K562 (cell line): ENCODE measurements at regions of chr7 and their contacts with region 1.

Region 1: GRCh38 chr7:35707422-35707821 is 12.5 kb upstream of the HERPUD2 start:
- DNase-seq: no peak
- ATAC-seq: no peak
- H3K4me3 ChIP-seq: no peak overlapping the region
- H3K27ac ChIP-seq: no peak overlapping the region
- H3K4me1 ChIP-seq: no peaks in the 10 kb centered on the region
- H3K27me3 ChIP-seq: peaks cover 2 to 13% of the 10 kb centered on the region in 2 experiments; a peak in 2 of 5 replicates
- CTCF ChIP-seq: no peak
- EP300 ChIP-seq: no peak
- POLR2A ChIP-seq: no peak
- RAD21 ChIP-seq: no peak

Region 2: DNA sequence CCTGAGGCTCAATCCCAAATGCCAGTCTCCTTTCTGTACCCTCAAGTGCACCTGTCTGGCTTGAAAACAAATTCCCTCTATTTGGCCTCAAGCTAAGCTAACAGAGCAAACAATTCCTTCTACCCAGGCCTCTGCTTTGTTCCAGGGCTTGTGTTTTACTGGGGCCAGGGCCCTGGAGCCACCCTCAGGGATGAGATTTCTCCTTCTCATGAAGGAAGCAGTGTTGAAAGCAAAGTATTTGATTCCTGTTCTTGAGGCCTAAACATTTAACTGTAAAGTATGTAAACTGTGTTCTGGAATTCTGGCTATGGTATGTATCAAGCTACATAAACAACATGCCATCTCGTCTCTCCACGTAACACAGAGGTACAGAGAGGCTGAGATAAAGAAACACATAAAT is 94.3 kb before region 1 on chr7:
- CTCF ChIA-PET with region 1: no interaction called
- POLR2A ChIA-PET with region 1: no interaction called
- in situ Hi-C with region 1: no loop called
- intact Hi-C with region 1: no loop called
- DNase-seq: no peak
- ATAC-seq: no peak
- H3K4me3 ChIP-seq: no peak overlapping the region
- H3K27ac ChIP-seq: no peak overlapping the region
- H3K4me1 ChIP-seq: no peaks in the 10 kb centered on the region
- H3K27me3 ChIP-seq: peaks cover 1 to 18% of the 10 kb centered on the region in 2 experiments; a peak in 4 of 5 replicates
- CTCF ChIP-seq: no peak
- EP300 ChIP-seq: no peak
- POLR2A ChIP-seq: no peak
- RAD21 ChIP-seq: no peak

Region 3: DNA sequence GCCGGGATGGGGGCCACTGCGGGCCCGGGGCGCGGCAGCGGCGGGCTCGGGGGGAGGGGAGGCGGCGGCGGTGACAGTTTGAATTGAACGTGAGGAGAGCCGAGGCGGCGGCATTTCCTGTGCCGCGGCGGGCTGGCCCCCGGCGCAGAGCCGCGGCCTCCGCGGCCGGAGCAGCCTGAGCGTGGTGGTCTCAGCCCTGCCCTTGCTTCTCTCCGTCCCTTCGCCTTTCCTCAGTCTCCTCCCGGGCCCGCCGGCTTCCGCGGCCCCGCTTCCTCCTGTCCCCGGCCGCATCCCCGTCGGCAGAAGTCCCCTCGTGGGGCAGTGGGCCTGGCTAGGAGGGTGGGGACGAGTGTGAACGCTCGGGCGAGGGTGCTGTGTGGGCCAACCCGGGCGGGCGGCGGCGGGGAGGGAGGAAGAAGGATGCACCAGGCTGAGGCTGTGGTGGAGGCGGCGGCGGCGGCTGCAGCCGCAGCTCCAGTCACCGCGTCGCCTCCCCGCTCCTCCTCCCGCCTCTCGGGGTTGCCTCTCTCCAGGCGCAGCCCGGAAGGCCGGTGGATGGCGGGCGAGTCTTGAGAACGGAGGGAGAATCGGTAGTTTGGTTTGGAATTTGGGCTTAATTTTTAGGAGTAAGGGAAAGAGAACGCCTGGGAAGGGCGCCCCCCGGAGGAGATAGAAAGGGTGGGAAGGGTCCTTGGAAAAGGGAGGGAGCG is 94.1 kb after region 1 on chr7:
- CTCF ChIA-PET with region 1: interaction called, 5 read pairs
- POLR2A ChIA-PET with region 1: interaction called, 3 read pairs
- in situ Hi-C with region 1: no loop called
- intact Hi-C with region 1: loop called (anchors 1 kb)
- DNase-seq: peak; percentile 48 to 68 (median 56)
- ATAC-seq: peak; percentile 73
- H3K4me3 ChIP-seq: peak overlapping the region; percentile 93
- H3K27ac ChIP-seq: peak overlapping the region; percentile 97
- H3K4me1 ChIP-seq: peaks cover 3 to 12% of the 10 kb centered on the region in 2 experiments; a peak in 3 of 5 replicates
- H3K27me3 ChIP-seq: no peaks in the 10 kb centered on the region
- CTCF ChIP-seq: peak; percentile 45 to 62 (median 60); a peak in 5 of 6 replicates
- EP300 ChIP-seq: no peak
- POLR2A ChIP-seq: no peak
- RAD21 ChIP-seq: peak; percentile 38 to 51; a peak in 3 of 4 replicates

Region 4: GRCh38 chr7:35975851-35976454 is 268.5 kb after region 1 on chr7:
- CTCF ChIA-PET with region 1: interaction called, 6 read pairs
- POLR2A ChIA-PET with region 1: no interaction called
- in situ Hi-C with region 1: no loop called
- intact Hi-C with region 1: loop called (anchors 5 kb)
- DNase-seq: peak; percentile 36 to 76 (median 38)
- ATAC-seq: peak; percentile 84
- H3K4me3 ChIP-seq: no peak overlapping the region
- H3K27ac ChIP-seq: no peak overlapping the region
- H3K4me1 ChIP-seq: peaks cover 0 to 8% of the 10 kb centered on the region in 2 experiments; a peak in 2 of 5 replicates
- H3K27me3 ChIP-seq: peaks cover 6 to 15% of the 10 kb centered on the region in 2 experiments; a peak in 4 of 5 replicates
- CTCF ChIP-seq: peak; percentile 73 to 83 (median 77)
- EP300 ChIP-seq: no peak
- POLR2A ChIP-seq: no peak
- RAD21 ChIP-seq: peak; percentile 80 to 90